ENCODE measurements at regions of chr2 and their contacts with region 1.

Region 1: GRCh38 chr2:171587567-171587966 is 65.3 kb downstream of the CYBRD1 start:
- DNase-seq: no peak
- H3K4me3 ChIP-seq: no peak overlapping the region
- H3K27ac ChIP-seq: no peak overlapping the region
- H3K4me1 ChIP-seq: no peaks in the 10 kb centered on the region
- H3K27me3 ChIP-seq: no peaks in the 10 kb centered on the region

Region 2: GRCh38 chr2:171247741-171248662 is 339.6 kb before region 1 on chr2:
- CTCF ChIA-PET with region 1: no interaction called
- POLR2A ChIA-PET with region 1: no interaction called
- DNase-seq: peak; percentile 45 to 93 (median 86)
- H3K4me3 ChIP-seq: peak overlapping the region in 2 of 7 experiments; percentile 2 to 13
- H3K27ac ChIP-seq: no peak overlapping the region
- H3K4me1 ChIP-seq: peaks cover 6 to 30% (median 10%) of the 10 kb centered on the region in 4 experiments
- H3K27me3 ChIP-seq: peaks cover 0 to 4% (median 0%) of the 10 kb centered on the region in 5 experiments

Region 3: GRCh38 chr2:171598713-171599319 is 11.2 kb after region 1 on chr2:
- CTCF ChIA-PET with region 1: interaction called, 11 read pairs
- POLR2A ChIA-PET with region 1: no interaction called
- DNase-seq: peak; percentile 61 to 75 (median 73)
- H3K4me3 ChIP-seq: no peak overlapping the region
- H3K27ac ChIP-seq: no peak overlapping the region
- H3K4me1 ChIP-seq: peaks cover 0 to 2% (median 0%) of the 10 kb centered on the region in 4 experiments
- H3K27me3 ChIP-seq: peaks cover 0 to 2% (median 0%) of the 10 kb centered on the region in 5 experiments

Measured in common myeloid progenitor, CD34-positive (primary cell).